ENCODE measurements at regions of chr18 and their contacts with region 1.

Region 1: GRCh38 chr18:59899298-59900221 is at the start of gene PMAIP1:
- DNase-seq: peak; percentile 93
- CTCF ChIP-seq: no peak

Region 2: GRCh38 chr18:59792353-59792752 is 107.2 kb before region 1 on chr18:
- CTCF ChIA-PET with region 1: no interaction called
- POLR2A ChIA-PET with region 1: no interaction called
- DNase-seq: no peak
- CTCF ChIP-seq: no peak

Region 3: DNA sequence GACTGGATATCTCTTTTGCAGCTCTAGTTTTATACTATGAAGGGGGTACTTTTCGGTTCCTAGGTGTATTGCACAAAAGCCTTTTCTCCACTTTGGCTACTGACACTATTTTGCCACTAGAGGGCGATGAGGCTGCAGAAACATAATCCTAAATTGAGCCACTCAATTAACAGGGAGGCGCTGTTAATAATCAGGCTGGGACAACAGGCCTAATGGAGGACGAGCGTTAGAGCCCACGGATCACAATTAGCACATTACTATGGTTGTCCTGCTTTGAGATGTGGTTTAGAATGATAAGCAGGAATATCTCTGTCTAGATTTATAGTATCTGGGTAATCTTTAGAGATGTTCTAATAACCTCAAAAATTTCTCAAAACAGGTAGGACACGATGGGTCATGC is 62.0 kb before region 1 on chr18:
- CTCF ChIA-PET with region 1: interaction called, 34 read pairs
- POLR2A ChIA-PET with region 1: interaction called, 31 read pairs
- DNase-seq: peak; percentile 72
- CTCF ChIP-seq: peak; percentile 92

Region 4: DNA sequence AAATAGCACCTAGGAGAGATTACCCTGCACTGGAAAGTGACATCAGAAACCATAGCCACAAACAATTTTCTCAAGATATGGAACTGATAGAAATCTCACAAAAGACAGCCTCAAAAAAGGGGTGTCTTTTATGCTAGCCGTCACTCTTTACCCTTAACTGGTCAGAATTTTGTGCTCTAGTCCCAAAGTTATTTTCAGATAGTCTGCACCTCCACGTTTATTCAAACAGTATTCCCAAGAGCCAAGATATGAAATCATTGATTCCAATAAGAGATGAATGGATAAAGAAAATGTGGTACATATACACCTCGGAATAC is 23.3 kb before region 1 on chr18:
- CTCF ChIA-PET with region 1: interaction called, 5 read pairs
- POLR2A ChIA-PET with region 1: interaction called, 32 read pairs
- DNase-seq: peak; percentile 58
- CTCF ChIP-seq: no peak

Region 5: DNA sequence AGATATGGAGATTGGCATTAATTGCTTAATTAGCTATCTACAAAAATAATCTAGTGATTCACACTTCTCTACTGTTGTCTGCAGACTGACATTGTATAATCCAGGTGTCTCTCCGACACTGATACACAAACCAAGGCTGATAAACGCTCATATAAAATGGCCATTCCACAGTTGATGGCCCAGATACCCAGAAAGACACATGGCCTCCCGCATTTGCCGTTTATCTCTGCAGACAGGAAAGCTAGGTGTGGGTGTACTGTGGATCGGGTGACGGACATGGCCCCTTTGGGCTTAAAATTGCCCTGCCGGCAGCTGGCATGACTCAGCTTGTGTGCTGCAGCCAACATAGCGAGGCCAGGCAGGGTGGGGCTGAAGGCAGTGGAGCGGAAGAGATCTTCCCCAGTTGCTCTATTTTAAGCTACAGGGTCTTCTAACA is 18.8 kb after region 1 on chr18:
- CTCF ChIA-PET with region 1: interaction called, 10 read pairs
- POLR2A ChIA-PET with region 1: interaction called, 28 read pairs
- DNase-seq: peak; percentile 37
- CTCF ChIP-seq: no peak

Region 6: DNA sequence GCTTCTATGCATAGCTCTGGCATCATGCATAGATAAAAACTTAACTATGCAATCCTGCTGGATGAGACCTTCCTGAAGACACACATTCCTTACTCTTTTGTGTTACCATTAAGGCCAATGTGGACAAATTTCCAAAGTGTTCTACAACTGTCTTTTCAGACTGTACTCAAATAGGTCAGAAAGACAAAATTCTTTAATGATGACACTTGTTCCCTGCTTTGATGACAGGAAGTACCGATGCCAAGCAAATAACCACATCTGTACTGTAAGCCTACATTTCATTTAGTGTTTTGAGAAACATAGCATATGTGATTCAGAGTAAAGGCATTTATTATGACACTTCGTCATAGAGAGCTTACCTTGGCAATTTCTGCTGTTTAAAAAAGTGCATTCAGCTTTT is 55.2 kb after region 1 on chr18:
- CTCF ChIA-PET with region 1: interaction called, 3 read pairs
- POLR2A ChIA-PET with region 1: interaction called, 24 read pairs
- DNase-seq: no peak
- CTCF ChIP-seq: no peak

Measured in GM10248 (cell line).